Calu3 (cell line): ENCODE measurements at regions of chr1 and their contacts with region 1.

Region 1: DNA sequence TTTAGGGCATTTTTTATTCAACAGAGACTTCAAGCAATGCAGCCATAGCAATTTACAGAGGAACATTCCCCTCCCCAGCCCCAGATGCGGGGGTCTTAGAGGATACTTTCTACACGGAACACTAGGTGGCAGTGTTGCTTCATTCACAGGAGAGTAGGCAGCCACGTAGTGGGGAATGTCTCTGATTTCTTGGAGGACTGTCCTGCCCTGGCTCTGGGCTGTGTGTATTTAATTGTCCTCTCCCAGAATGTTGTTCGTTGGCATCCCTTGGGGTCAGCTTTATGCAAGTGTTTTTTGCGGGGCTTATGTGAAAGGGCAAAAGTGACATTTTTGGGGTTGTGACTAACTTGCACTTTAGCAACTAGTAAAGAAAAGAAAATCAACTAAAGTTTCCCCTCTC is 96.9 kb downstream of the PAPPA2 start:
- DNase-seq: peak; percentile 64
- H3K4me3 Mint-ChIP-seq: no peak overlapping the region
- H3K27ac Mint-ChIP-seq: no peak overlapping the region
- H3K4me1 Mint-ChIP-seq: no peaks in the 10 kb centered on the region
- H3K27me3 Mint-ChIP-seq: peaks cover 43% of the 10 kb centered on the region
- CTCF ChIP-seq: peak; percentile 91

Region 2: DNA sequence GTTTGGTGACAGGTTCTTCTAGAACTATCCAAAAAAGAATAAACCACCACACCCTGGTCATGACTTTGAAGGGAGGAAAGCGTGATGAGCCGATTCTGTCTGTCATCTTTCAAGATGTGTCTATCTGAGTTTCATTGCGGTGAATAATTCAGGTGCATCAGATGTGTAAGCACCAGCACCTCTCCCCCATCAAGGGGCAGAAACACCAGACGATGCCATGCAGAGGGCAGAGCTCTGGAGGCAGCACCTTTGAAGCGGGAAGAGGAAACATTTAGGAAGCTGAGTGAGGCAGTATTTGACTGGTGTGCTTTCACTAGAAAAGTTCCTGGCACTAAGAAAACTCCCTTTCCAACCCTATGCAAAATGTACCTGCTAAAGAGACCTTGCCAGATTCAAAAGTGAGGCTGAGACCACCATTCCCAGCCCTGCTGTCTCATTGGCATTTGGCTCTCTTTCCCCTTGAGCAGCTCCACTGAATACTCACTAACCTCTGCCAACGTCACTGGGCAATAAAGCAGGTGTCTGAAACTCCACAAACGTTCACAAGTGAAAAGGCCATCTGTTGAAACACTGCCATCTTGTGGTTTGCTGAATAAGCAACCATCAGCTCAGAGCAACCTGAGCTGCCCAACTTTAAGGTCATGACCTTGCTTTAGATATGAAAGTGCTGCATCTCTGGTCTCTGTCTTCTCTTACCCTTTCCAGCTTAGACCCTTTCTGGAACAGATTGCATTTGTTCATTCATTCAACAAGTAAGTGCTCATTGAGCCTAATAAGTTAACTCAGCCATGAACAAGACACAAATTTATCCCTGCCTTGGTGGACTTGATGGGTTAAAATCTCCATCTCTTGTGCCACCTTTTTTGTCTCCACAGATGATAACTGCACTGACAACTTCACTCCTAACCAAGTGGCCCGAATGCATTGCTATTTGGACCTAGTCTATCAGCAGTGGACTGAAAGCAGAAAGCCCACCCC is 131.7 kb after region 1 on chr1:
- CTCF ChIA-PET with region 1: interaction called, 4 read pairs
- intact Hi-C with region 1: loop called (anchors 1 kb)
- DNase-seq: peak; percentile 40
- H3K4me3 Mint-ChIP-seq: no peak overlapping the region
- H3K27ac Mint-ChIP-seq: no peak overlapping the region
- H3K4me1 Mint-ChIP-seq: no peaks in the 10 kb centered on the region
- H3K27me3 Mint-ChIP-seq: peaks cover 46% of the 10 kb centered on the region
- CTCF ChIP-seq: peak; percentile 53

Region 3: GRCh38 chr1:176843352-176844297 is 283.7 kb after region 1 on chr1:
- CTCF ChIA-PET with region 1: no interaction called
- intact Hi-C with region 1: loop called (anchors 2 kb)
- DNase-seq: peak; percentile 32
- H3K4me3 Mint-ChIP-seq: no peak overlapping the region
- H3K27ac Mint-ChIP-seq: no peak overlapping the region
- H3K4me1 Mint-ChIP-seq: no peaks in the 10 kb centered on the region
- H3K27me3 Mint-ChIP-seq: peaks cover 79% of the 10 kb centered on the region
- CTCF ChIP-seq: no peak

Region 4: DNA sequence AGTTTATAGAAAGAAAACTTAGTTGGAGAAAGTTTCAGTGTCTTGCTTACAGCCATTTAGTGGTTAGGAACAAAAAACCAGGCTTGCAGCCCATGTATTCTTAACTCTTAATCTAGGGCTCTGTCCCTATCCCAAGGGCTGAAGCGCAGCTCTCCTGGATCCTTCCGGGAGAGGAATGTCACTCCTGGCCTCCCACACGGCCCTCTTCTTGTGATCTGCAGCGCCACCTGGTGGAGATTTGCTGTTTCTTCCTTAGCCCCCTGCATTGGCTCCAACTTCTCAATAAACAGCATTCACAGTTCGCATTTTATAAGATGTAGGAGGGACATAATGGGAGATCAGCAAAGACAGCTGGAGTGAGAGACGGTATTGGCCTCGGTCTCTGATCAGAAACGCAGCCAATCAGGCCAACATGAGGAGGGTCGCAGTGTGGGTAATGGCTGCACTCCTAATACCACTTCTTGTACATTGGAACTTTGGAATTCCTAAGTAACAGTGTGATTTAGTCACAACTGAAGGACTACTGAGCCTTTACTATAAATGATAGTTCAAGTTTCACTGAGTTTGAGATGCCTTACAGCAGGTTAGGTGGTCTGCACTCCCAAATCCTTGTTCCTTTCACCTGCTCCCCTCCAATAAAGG is 321.2 kb after region 1 on chr1:
- CTCF ChIA-PET with region 1: no interaction called
- intact Hi-C with region 1: loop called (anchors 1 kb)
- DNase-seq: peak; percentile 81
- H3K4me3 Mint-ChIP-seq: no peak overlapping the region
- H3K27ac Mint-ChIP-seq: no peak overlapping the region
- H3K4me1 Mint-ChIP-seq: no peaks in the 10 kb centered on the region
- H3K27me3 Mint-ChIP-seq: peaks cover 52% of the 10 kb centered on the region
- CTCF ChIP-seq: peak; percentile 93